CD8-positive, alpha-beta memory T cell (primary cell): ENCODE measurements at regions of chr7 and their contacts with region 1.

Region 1: DNA sequence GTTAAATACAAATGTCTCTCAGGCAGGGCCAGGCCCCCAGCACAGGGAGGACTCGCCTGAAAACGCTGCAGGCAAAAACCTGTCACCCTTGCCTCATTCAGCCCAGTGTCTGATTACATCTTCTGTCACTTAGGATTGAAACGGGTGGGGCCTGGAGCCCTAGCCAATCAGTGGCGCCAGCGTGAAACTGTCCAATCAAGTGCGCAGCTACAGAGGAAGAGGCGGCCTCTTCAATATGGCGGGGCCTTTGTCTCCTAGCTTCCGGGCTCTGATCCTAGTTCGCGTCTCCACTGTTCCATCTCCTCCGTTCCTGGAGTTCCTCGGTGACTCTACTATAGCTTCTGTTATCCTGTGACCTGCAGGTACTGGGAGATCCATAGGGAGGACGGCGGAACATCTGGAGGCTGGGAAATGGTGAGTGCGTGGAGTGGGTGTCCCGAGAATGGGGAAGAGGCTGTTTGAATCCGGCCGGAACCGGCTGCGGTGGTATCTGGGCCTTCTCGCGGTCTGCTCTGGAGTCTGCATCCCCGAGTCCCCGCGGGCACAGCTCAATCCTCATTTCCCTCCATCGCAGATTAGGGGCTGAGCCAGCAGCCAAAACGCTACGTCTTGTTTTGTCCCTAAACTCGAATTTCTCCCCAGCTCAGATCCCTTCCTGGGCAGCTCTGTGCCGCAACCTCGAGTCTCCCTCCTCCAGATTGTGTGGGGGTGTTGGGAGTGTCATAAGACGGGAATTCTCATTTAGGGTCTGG is at the start of gene ZNF736:
- DNase-seq: peak; percentile 80 to 94 (median 86)
- H3K4me3 ChIP-seq: peak within 1 kb of the TSS; percentile 98
- H3K4me3 Mint-ChIP-seq: peak within 1 kb of the TSS; percentile 92 to 99 (median 99)
- H3K27ac ChIP-seq: peak within 1 kb of the TSS; percentile 85
- H3K27ac Mint-ChIP-seq: peak within 1 kb of the TSS; percentile 89 to 99 (median 98)
- H3K4me1 ChIP-seq: peaks cover 23% of the 10 kb centered on the region
- H3K4me1 Mint-ChIP-seq: peaks cover 34 to 53% (median 39%) of the 10 kb centered on the region in 3 donors
- H3K27me3 ChIP-seq: no peaks in the 10 kb centered on the region
- H3K27me3 Mint-ChIP-seq: no peaks in the 10 kb centered on the region
- total RNA-seq, gene ZNF736: 22.8 to 24.1 TPM

Region 2: GRCh38 chr7:64294701-64295420 is 19.1 kb before region 1 on chr7:
- CTCF ChIA-PET with region 1: no interaction called
- POLR2A ChIA-PET with region 1: no interaction called
- DNase-seq: no peak
- H3K4me3 ChIP-seq: no peak overlapping the region
- H3K4me3 Mint-ChIP-seq: no peak overlapping the region
- H3K27ac ChIP-seq: no peak overlapping the region
- H3K27ac Mint-ChIP-seq: no peak overlapping the region
- H3K4me1 ChIP-seq: no peaks in the 10 kb centered on the region
- H3K4me1 Mint-ChIP-seq: no peaks in the 10 kb centered on the region
- H3K27me3 ChIP-seq: no peaks in the 10 kb centered on the region
- H3K27me3 Mint-ChIP-seq: no peaks in the 10 kb centered on the region

Region 3: DNA sequence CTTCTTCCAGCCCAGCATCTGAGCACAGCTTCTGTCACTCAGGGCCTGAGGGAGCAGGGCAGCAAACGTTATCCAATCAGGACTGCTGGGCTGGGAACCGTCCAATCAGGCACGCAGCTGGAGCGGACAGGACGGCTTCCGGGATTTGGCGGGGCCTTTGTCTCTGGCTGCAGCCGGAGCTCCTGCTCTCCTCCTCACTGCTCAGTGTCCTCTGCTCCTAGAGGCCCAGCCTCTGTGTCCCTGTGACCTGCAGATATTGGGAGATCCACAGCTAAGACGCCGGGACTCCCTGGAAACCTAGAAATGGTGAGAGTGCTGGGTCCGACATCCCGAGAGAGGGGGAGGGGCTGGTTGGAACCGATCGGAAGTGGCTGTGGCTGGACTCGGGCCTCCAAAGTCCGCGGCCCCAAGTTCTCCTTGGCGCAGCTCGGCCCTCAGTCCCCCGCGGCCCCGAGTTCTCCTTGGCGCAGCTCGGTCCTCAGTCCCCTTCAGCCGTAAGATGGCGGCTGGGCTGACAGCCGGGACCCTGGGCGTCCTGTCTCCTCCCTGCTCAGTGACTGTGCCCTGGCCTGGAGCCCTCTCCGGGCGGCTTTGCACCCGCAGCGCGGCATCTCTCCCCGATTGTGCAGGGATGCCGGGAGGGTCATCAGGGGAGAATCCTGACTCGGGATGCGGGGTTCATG is 352.2 kb after region 1 on chr7 and contains the start of gene ZNF107:
- CTCF ChIA-PET with region 1: no interaction called
- POLR2A ChIA-PET with region 1: interaction called, 10 read pairs
- DNase-seq: peak; percentile 74 to 94 (median 86)
- H3K4me3 ChIP-seq: peak within 1 kb of the TSS; percentile 99
- H3K4me3 Mint-ChIP-seq: peak within 1 kb of the TSS; percentile 94 to 99 (median 97)
- H3K27ac ChIP-seq: peak within 1 kb of the TSS; percentile 88
- H3K27ac Mint-ChIP-seq: peak within 1 kb of the TSS; percentile 96 to 100 (median 97)
- H3K4me1 ChIP-seq: peaks cover 17% of the 10 kb centered on the region
- H3K4me1 Mint-ChIP-seq: peaks cover 62 to 84% (median 73%) of the 10 kb centered on the region in 3 donors
- H3K27me3 ChIP-seq: no peaks in the 10 kb centered on the region
- H3K27me3 Mint-ChIP-seq: no peaks in the 10 kb centered on the region
- total RNA-seq, gene ZNF107: 13.5 to 14.2 TPM